ENCODE measurements at regions of chr1 and their contacts with region 1.

Region 1: GRCh38 chr1:17319561-17320350 is 11.8 kb downstream of the PADI4 start:
- DNase-seq: no peak
- H3K4me3 Mint-ChIP-seq: no peak overlapping the region
- H3K27ac Mint-ChIP-seq: no peak overlapping the region
- H3K4me1 Mint-ChIP-seq: no peaks in the 10 kb centered on the region
- H3K27me3 Mint-ChIP-seq: no peaks in the 10 kb centered on the region
- CTCF ChIP-seq: no peak

Region 2: DNA sequence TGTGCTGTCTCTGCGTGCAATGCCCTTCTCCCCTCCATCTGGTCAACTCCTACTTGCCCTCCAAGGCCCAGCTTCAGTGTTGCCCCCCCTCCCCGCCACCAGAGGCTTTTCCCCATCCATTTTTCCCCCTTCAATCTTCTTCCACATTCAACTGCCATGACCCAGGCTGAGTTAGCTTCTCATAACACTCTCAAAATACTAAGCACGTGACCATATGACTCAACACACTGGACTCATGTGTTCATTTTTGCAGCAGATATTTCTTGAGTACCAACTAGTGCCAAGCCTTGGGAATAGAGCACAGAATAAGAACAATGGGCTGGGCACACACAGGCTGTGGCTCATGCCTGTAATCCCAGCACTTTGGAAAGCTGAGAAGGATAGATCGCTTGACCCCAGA is 919.9 kb after region 1 on chr1:
- CTCF ChIA-PET with region 1: interaction called, 14 read pairs
- intact Hi-C with region 1: no loop called
- DNase-seq: no peak
- H3K4me3 Mint-ChIP-seq: no peak overlapping the region
- H3K27ac Mint-ChIP-seq: no peak overlapping the region
- H3K4me1 Mint-ChIP-seq: no peaks in the 10 kb centered on the region
- H3K27me3 Mint-ChIP-seq: peaks cover 84% of the 10 kb centered on the region
- CTCF ChIP-seq: no peak

Measured in Calu3 (cell line).